Heart left ventricle (tissue), 16 donors: ENCODE measurements at regions of chr1 and their contacts with region 1.

Region 1: GRCh38 chr1:201703621-201704439 is 125.1 kb upstream of the IPO9 start:
- DNase-seq: peak; percentile 85 to 91 (median 88)
- ATAC-seq: peak; percentile 83 to 93 (median 84)
- H3K4me3 ChIP-seq: no peak overlapping the region
- H3K27ac ChIP-seq: peak overlapping the region in 11 of 12 donors; percentile 30 to 79 (median 60)
- H3K4me1 ChIP-seq: peaks cover 8 to 41% (median 24%) of the 10 kb centered on the region in 12 donors
- H3K27me3 ChIP-seq: no peaks in the 10 kb centered on the region
- CTCF ChIP-seq: peak; percentile 96 to 100 (median 98)
- POLR2A ChIP-seq: no peak

Region 2: DNA sequence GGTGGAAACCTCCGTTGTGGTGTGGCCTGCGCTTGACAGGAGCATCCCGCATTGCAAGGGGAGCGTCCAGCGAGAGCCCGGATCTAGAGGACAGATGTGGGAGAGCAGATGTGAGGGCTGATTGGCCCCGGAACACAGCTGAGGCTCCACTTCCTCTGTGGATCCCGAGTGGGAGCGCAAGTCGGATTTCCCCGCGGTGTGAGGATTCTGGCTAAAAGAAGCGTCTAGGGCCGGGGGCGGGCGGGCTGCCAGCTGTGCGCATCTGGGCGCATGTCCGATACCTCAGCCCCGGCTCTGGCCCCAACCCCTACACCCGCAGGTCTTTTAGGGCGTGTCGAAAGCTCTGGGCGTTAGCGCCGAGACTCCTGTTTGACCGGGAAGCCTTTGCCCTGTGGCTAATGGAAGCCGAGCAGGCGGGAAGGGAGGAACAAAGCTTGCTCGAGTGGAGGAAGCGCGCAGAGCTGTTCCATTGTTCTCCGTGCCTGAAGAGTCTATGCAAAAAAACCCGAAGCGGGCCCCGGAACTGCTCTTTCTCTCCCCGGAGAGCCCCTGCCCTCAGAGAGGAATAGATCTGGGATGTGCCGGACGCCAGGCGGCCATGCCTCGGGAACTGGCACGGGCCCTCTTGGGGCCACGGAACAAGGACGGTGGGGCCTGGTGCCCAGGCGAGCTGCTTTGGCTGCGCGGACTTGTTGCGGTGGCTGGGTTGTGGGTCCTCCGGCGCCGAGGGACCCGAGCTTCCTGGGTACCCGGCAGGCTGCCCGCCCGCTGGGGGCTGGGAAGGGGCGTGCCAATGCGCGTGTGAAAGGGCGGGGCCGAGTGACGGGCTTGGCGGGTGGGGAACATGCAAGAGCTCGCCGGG is 53.8 kb before region 1 on chr1:
- intact Hi-C with region 1: loop called in 5 of 10 experiments (anchors 2 to 10 kb)
- DNase-seq: peak; percentile 82 to 93 (median 87)
- ATAC-seq: peak; percentile 47 to 74 (median 70)
- H3K4me3 ChIP-seq: peak overlapping the region; percentile 36 to 93 (median 68)
- H3K27ac ChIP-seq: peak overlapping the region; percentile 18 to 94 (median 80)
- H3K4me1 ChIP-seq: peaks cover 4 to 86% (median 63%) of the 10 kb centered on the region in 12 donors
- H3K27me3 ChIP-seq: no peaks in the 10 kb centered on the region
- CTCF ChIP-seq: peak in 1 of 12 donors; percentile 17
- POLR2A ChIP-seq: peak in 1 of 2 donors; percentile 18